ENCODE measurements at regions of chr15 and their contacts with region 1.

Region 1: GRCh38 chr15:75367913-75368688 is at the start of gene MAN2C1:
- DNase-seq: peak; percentile 95
- ATAC-seq: peak; percentile 90
- H3K4me3 Mint-ChIP-seq: peak within 1 kb of the TSS; percentile 90
- H3K27ac Mint-ChIP-seq: peak within 1 kb of the TSS; percentile 96
- H3K4me1 Mint-ChIP-seq: peaks cover 18% of the 10 kb centered on the region
- H3K27me3 Mint-ChIP-seq: no peaks in the 10 kb centered on the region
- CTCF ChIP-seq: no peak
- total RNA-seq, gene MAN2C1: 148 to 155 TPM (median 151 TPM) in 3 replicates

Region 2: DNA sequence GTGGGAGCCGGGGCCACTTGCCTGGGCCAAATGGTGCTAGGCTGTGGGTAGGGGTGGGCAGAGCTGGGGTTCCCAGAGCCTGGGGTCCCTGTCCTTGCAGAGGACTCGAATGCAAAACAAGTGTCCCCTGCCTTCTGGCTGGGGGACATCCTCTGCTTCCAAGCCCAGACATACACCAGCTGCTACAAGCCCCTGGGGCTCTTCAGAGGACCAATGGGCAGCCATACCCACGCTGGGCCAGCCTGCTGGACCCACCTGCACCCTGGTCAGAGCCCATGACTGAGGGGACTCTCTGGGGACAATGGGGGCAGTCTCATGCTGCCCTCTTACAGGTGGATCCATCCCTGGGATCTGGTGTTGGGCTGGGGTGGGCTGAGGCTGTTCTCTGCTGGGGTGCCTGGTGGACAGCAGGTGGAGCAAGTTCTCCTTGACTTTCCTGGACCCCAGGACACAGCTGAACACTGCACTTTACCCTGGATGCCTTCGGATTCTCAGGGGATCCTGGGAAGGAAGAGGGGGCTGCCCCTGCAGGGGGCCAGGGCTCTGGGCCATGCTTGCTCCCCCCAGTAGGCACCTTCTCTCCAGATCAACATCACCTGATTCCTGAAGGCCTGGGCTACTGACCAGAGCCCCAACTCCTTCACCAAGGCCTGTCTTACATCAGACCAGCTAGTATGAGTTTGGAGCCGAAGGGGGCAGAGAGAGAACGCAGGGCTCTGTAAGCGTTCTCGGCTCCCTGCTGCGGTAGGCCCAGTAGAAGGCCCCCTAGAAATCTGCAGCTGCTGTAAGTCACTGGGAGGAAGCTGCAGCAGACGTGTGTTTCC is 39.4 kb before region 1 on chr15:
- CTCF ChIA-PET with region 1: interaction called, 13 read pairs
- POLR2A ChIA-PET with region 1: no interaction called
- DNase-seq: no peak
- ATAC-seq: no peak
- H3K4me3 Mint-ChIP-seq: no peak overlapping the region
- H3K27ac Mint-ChIP-seq: no peak overlapping the region
- H3K4me1 Mint-ChIP-seq: no peaks in the 10 kb centered on the region
- H3K27me3 Mint-ChIP-seq: peaks cover 7% of the 10 kb centered on the region; the same call in 1 of the 2 replicates
- CTCF ChIP-seq: no peak

Region 3: DNA sequence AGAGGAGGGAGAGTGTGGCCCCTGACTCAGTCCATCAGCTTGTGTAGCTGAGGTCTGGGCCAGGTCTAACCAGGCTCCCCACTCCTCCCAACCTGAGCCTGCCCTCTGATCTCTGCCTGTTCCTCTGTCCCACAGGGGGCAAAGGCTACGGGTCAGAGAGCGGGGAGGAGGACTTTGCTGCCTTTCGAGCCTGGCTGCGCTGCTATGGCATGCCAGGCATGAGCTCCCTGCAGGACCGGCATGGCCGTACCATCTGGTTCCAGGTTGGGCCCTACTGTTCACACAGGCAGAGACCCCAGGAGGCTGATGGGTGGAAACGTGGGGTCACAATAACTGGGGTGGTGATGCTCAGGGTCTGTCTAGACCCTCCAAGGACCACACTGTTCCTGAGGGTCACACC is 14.5 kb before region 1 on chr15:
- CTCF ChIA-PET with region 1: interaction called, 25 read pairs
- POLR2A ChIA-PET with region 1: interaction called, 14 read pairs
- DNase-seq: no peak
- ATAC-seq: no peak
- H3K4me3 Mint-ChIP-seq: no peak overlapping the region
- H3K27ac Mint-ChIP-seq: no peak overlapping the region
- H3K4me1 Mint-ChIP-seq: peaks cover 5% of the 10 kb centered on the region
- H3K27me3 Mint-ChIP-seq: peaks cover 14% of the 10 kb centered on the region
- CTCF ChIP-seq: no peak

Region 4: GRCh38 chr15:75639709-75640482 is 271.8 kb after region 1 on chr15 and contains the start of gene IMP3:
- CTCF ChIA-PET with region 1: interaction called, 10 read pairs
- POLR2A ChIA-PET with region 1: interaction called, 19 read pairs
- DNase-seq: peak; percentile 96
- ATAC-seq: peak; percentile 97
- H3K4me3 Mint-ChIP-seq: peak within 1 kb of the TSS; percentile 92
- H3K27ac Mint-ChIP-seq: peak within 1 kb of the TSS; percentile 98
- H3K4me1 Mint-ChIP-seq: peaks cover 35% of the 10 kb centered on the region
- H3K27me3 Mint-ChIP-seq: peaks cover 1% of the 10 kb centered on the region; the same call in 1 of the 2 replicates
- CTCF ChIP-seq: no peak
- total RNA-seq, gene IMP3: 93.7 to 107 TPM (median 94.8 TPM) in 3 replicates

Region 5: DNA sequence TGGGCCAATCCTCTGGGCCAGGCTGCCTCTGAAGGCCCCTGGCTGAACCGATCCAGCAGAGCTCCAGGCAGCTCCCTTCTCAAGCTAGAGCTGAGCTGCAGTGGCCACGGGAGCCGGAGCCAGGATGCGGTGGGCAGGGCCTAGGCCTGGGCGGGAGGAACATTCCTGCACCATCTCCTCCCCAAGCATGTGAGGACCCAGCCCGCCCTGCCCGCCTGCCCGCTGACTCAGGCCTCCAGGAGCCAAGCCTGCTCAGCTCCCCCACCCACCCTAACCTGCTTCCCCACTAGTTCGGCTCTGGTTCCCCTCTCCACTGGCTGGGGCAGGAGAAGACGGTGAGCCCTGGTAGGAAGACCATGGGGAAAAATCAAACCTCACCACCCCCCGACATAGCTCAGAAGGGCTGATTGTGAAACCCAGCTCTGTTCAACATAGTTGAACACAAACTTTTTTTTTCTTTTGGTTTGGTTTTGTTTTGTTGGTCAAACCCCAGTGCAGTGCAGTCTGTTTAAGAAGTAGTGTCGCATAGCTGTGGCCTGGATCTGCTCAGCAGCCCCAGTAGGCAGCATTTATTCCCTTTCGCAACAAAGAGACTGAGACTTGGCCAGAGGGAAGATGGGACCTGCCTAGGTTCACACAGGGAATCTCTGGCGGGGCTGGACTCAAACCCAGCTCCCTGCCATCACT is 293.1 kb after region 1 on chr15:
- CTCF ChIA-PET with region 1: interaction called, 10 read pairs
- POLR2A ChIA-PET with region 1: no interaction called
- DNase-seq: peak; percentile 57
- ATAC-seq: peak; percentile 89
- H3K4me3 Mint-ChIP-seq: no peak overlapping the region
- H3K27ac Mint-ChIP-seq: peak overlapping the region; percentile 44; the same call in 1 of the 2 replicates
- H3K4me1 Mint-ChIP-seq: no peaks in the 10 kb centered on the region
- H3K27me3 Mint-ChIP-seq: no peaks in the 10 kb centered on the region
- CTCF ChIP-seq: no peak

Region 6: DNA sequence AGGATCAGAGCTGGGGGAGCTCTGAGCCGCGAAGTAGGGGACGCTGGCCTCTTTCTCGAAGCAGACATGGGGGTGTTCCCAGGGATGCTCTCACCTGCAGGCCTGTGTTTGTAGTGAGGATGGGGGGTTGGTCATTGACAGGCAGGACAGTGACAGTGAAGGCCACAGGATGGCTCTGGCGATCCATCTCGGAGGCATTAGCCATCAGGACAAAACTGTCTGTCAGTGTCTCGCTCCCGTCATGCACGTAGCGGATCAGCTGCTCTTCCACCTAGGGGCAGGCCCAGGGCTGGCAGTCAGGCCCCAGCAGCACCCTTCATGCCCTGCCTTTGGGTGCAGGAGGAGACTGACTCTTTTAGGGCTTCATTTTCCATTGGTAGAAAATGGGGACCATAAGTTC is 316.5 kb after region 1 on chr15:
- CTCF ChIA-PET with region 1: interaction called, 18 read pairs
- POLR2A ChIA-PET with region 1: no interaction called
- DNase-seq: no peak
- ATAC-seq: no peak
- H3K4me3 Mint-ChIP-seq: no peak overlapping the region
- H3K27ac Mint-ChIP-seq: no peak overlapping the region
- H3K4me1 Mint-ChIP-seq: peaks cover 22% of the 10 kb centered on the region
- H3K27me3 Mint-ChIP-seq: 0 out of 2 replicates have a peak, but pooled peaks cover 2% of the 10 kb centered on the region
- CTCF ChIP-seq: no peak